ENCODE measurements at regions of chr11 and their contacts with region 1.

Region 1: GRCh38 chr11:9613118-9613829 is 39.8 kb downstream of the WEE1 start:
- DNase-seq: peak; percentile 94 to 96
- ATAC-seq: peak; percentile 91 to 96 (median 94)
- H3K4me3 ChIP-seq: peak overlapping the region; percentile 0 to 64 (median 56)
- H3K27ac ChIP-seq: peak overlapping the region; percentile 91 to 99 (median 96)
- H3K4me1 ChIP-seq: peaks cover 3 to 34% (median 24%) of the 10 kb centered on the region in 9 donors
- H3K27me3 ChIP-seq: no peaks in the 10 kb centered on the region
- CTCF ChIP-seq: peak; percentile 79 to 99 (median 96)

Region 2: DNA sequence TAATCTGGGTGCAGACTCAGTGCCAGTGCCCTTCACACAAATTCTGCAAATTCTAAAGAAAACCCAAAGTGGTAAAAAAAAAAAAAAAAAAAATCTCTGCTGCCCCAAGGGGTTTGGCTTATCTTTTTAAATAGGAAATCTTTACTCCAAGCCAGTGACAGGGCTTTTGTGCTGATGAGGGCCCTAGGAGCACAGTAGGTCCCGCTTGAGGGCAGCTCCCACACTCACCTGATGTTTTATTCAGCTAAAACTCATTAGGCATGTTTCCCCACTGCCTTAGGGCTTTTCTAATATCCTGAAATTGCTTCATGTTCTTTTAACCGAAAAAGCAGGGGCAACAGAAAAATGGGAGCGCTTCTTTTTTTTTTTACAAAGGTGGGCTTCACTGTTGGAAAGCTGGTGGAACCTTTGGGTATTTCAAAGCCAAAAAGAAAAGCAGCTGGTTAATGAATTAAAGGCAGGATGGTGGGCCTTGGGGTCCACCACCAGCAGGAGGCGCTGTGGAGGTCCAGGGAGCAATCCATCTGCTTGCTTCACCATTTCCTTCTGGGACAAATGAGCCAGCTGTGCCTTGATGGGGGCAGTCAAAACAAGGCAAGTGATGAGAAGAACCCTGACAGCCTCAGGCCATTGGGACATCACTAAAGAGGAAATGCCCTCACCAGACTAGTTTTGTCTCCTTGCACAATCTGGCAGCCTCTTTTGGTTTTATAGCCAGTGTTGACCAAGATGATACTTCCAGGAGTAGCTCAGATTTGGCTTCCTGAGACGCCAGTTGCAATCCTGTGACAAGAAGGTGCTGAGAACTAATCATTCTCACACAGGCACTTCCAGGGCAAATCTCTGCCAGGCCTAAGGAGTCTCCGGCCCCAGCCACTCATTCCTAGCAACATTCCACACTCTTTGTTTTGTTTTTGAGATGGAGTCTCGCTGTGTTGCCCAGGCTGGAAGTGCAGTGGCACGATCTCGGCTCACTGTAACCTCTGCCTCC is 78.2 kb before region 1 on chr11:
- intact Hi-C with region 1: loop called in 8 of 10 experiments (anchors 2 to 10 kb)
- DNase-seq: peak; percentile 72 to 83
- ATAC-seq: peak in 7 of 8 donors; percentile 52 to 91 (median 74)
- H3K4me3 ChIP-seq: no peak overlapping the region
- H3K27ac ChIP-seq: no peak overlapping the region
- H3K4me1 ChIP-seq: peaks cover 0 to 13% (median under 1%) of the 10 kb centered on the region in 9 donors
- H3K27me3 ChIP-seq: no peaks in the 10 kb centered on the region
- CTCF ChIP-seq: peak; percentile 56 to 83 (median 75)

Region 3: GRCh38 chr11:9573052-9573774 is 40.1 kb before region 1 on chr11 and contains the start of gene WEE1:
- intact Hi-C with region 1: loop called in 6 of 10 experiments (anchors 2 to 5 kb)
- DNase-seq: peak; percentile 98 to 99
- ATAC-seq: peak; percentile 94 to 98 (median 96)
- H3K4me3 ChIP-seq: peak within 1 kb of the TSS; percentile 54 to 95 (median 82)
- H3K27ac ChIP-seq: peak within 1 kb of the TSS; percentile 86 to 98 (median 96)
- H3K4me1 ChIP-seq: peaks cover 3 to 57% (median 35%) of the 10 kb centered on the region in 9 donors
- H3K27me3 ChIP-seq: no peaks in the 10 kb centered on the region
- CTCF ChIP-seq: no peak
- total RNA-seq, gene WEE1: 22.9 to 114 (median 59.0) TPM

Region 4: DNA sequence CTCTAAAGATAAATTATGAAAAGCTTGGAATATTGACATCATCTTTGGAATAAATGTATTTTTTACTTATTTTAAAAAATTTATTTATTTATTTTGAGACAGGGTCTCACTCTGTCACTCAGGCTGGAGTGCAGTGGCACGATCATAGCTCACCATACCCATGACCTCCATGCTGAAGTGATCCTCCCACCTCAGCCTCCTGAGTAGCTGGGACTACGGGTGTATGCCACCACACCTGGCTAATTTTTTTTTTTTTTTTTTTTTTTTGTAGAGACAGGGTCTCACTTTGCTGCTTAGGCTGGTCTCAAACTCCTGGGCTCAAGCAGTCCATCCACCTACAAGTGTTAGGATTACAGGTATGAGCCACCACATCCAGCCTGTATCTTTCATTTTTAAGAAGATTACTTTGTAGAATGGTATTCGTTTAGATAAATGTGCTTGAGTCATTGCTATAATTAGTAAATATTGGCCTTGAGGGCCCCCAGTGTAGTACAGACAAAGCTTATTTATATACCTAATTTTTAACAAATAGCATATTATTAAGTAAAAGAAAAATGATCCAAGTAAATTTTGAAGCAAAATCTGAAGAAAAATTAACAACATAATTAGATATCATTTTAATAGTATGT is 59.1 kb after region 1 on chr11:
- intact Hi-C with region 1: no loop called
- DNase-seq: no peak
- ATAC-seq: peak in 1 of 8 donors; percentile 53
- H3K4me3 ChIP-seq: no peak overlapping the region
- H3K27ac ChIP-seq: no peak overlapping the region
- H3K4me1 ChIP-seq: peaks cover 0 to 59% (median 15%) of the 10 kb centered on the region in 9 donors
- H3K27me3 ChIP-seq: no peaks in the 10 kb centered on the region
- CTCF ChIP-seq: no peak

Region 5: DNA sequence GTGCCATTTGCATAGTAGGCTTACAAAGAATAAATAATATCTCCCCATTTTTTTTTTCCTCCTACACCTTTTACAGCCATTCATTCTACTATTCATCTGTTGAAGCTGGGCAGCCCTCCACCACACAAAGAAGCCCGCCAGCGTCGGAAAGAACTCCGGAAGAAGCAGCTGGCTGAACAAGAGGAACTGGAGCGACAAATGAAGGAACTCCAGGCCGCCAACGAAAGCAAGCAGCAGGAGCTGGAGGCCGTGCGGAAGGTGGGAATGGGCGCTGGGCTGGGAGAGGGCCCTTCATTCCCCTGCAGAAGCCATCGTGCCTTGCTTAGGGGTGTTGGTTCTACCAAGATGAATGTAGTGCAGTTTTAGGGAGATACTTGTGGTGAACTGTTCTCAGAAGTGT is 119.2 kb after region 1 on chr11:
- intact Hi-C with region 1: loop called in 1 of 10 experiments (anchors 5 kb)
- DNase-seq: no peak
- ATAC-seq: no peak
- H3K4me3 ChIP-seq: no peak overlapping the region
- H3K27ac ChIP-seq: no peak overlapping the region
- H3K4me1 ChIP-seq: peaks cover 0 to 6% (median 0%) of the 10 kb centered on the region in 9 donors
- H3K27me3 ChIP-seq: no peaks in the 10 kb centered on the region
- CTCF ChIP-seq: no peak

Region 6: GRCh38 chr11:9972989-9973388 is 359.7 kb after region 1 on chr11:
- intact Hi-C with region 1: loop called in 1 of 10 experiments (anchors 5 kb)
- DNase-seq: peak in 1 of 2 donors; percentile 9
- ATAC-seq: peak; percentile 47 to 82 (median 71)
- H3K4me3 ChIP-seq: no peak overlapping the region
- H3K27ac ChIP-seq: no peak overlapping the region
- H3K4me1 ChIP-seq: peaks cover 0 to 22% (median 16%) of the 10 kb centered on the region in 9 donors
- H3K27me3 ChIP-seq: no peaks in the 10 kb centered on the region
- CTCF ChIP-seq: peak; percentile 40 to 82 (median 72)